GM12878 (cell line): ENCODE measurements at regions of chr6 and their contacts with region 1.

Region 1: GRCh38 chr6:27188885-27189418 is 58.5 kb upstream of the PRSS16 start:
- DNase-seq: peak; percentile 50
- ATAC-seq: peak; percentile 91
- H3K4me3 ChIP-seq: peak overlapping the region; percentile 75
- H3K27ac ChIP-seq: peak overlapping the region; percentile 78
- H3K4me1 ChIP-seq: no peaks in the 10 kb centered on the region
- H3K27me3 ChIP-seq: no peaks in the 10 kb centered on the region
- CTCF ChIP-seq: peak; percentile 49 to 71 (median 59); a peak in 5 of 6 replicates
- EP300 ChIP-seq: no peak
- POLR2A ChIP-seq: no peak
- RAD21 ChIP-seq: peak; percentile 90

Region 2: DNA sequence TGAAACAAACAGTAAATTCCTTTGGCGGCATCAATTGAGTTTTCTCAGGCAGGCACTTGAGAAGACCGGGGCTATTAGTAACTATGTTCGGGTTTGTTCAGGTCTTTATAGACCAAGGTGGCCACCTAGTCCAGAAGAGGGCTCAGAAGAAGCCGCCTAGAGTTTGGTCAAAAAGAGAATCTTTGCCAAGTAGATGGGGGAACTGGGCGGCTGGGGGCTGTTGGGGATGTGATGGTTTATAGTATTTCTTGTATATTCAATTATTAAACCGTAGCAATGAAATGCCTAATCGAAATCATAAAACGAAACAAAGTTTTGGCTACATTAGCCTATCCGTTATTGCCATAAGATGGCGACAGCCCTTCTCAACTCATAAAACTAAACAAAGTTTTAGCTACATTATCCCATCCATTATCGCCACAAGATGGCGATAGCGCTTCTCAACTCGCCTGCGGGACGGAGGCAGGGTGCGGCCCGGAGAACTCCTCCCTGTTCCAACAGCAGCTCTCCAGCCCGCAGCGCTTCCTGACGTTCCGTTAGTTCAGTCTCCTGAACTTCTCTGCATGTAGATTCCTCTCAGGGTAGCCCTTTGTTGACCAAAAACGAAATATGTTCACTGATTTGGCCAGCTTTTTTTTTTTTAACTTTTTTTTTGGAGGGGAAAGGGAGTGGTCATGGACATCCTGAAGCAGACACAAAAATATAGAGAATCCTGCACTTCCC is 62.0 kb before region 1 on chr6:
- CTCF ChIA-PET with region 1: interaction called, 7 read pairs
- POLR2A ChIA-PET with region 1: no interaction called
- RAD21 ChIA-PET with region 1: interaction called, 5 read pairs
- SMC1A ChIA-PET with region 1: interaction called, 11 read pairs
- in situ Hi-C with region 1: no loop called
- intact Hi-C with region 1: no loop called
- DNase-seq: peak; percentile 85
- ATAC-seq: peak; percentile 72
- H3K4me3 ChIP-seq: peak overlapping the region; percentile 72
- H3K27ac ChIP-seq: peak overlapping the region; percentile 93
- H3K4me1 ChIP-seq: peaks cover 16% of the 10 kb centered on the region
- H3K27me3 ChIP-seq: no peaks in the 10 kb centered on the region
- CTCF ChIP-seq: peak; percentile 73 to 98 (median 83); a peak in 5 of 6 replicates
- EP300 ChIP-seq: no peak
- POLR2A ChIP-seq: peak; percentile 54
- RAD21 ChIP-seq: peak; percentile 86

Region 3: DNA sequence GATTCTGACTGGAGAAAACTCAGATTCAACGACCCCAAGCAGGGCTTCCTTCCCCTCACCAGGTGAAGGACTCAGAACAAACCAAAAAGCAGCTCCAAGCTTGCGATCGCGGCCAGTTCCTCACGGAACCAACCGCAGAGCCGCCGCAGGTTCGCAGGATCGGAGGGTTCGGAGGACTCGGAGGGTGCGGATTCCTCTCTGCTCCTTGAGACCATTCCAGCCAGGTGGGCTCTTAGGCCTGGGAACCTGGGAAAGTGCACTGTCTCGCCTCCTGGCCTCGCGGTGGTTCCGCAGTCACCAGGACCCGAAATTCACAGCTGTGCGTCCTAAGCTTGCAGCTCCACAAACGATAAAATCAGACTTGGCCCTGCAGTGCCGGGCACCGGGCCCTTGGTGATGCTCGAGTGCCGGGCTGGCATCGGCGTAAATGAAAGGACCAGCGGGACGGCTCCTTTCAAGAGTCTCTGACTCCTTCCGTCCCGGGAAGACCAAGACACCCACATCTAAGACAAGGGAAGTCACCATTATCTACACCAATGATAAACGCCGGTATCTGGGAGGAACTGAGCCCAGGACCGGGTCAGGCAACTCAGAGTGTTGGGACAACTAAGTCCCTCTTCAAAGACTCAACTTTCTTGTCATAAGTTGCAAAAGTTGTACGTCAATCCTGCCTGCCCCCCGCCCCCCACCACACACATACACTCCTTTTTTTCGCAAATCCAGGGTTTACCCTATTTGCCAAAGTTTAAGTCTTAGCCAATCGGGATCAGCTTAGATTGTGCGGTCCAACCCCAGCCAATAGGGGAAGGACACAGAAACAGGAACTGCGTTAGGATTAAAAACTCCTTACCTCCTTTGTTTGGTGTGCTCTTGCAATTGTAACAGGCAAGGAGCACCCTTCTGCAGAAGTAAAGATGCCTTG is 11.2 kb before region 1 on chr6:
- CTCF ChIA-PET with region 1: interaction called, 14 read pairs
- POLR2A ChIA-PET with region 1: interaction called, 3 read pairs
- RAD21 ChIA-PET with region 1: interaction called, 7 read pairs
- SMC1A ChIA-PET with region 1: interaction called, 10 read pairs
- in situ Hi-C with region 1: no loop called
- intact Hi-C with region 1: no loop called
- DNase-seq: peak; percentile 61
- ATAC-seq: peak; percentile 89
- H3K4me3 ChIP-seq: peak overlapping the region; percentile 89
- H3K27ac ChIP-seq: peak overlapping the region; percentile 93
- H3K4me1 ChIP-seq: no peaks in the 10 kb centered on the region
- H3K27me3 ChIP-seq: no peaks in the 10 kb centered on the region
- CTCF ChIP-seq: peak; percentile 65 to 72 (median 70)
- EP300 ChIP-seq: no peak
- POLR2A ChIP-seq: peak; percentile 56; the same call in 1 of the 2 replicates
- RAD21 ChIP-seq: peak; percentile 54

Region 4: GRCh38 chr6:27242589-27243265 is 53.8 kb after region 1 on chr6:
- CTCF ChIA-PET with region 1: no interaction called
- POLR2A ChIA-PET with region 1: no interaction called
- RAD21 ChIA-PET with region 1: no interaction called
- SMC1A ChIA-PET with region 1: no interaction called
- in situ Hi-C with region 1: no loop called
- intact Hi-C with region 1: no loop called
- DNase-seq: no peak
- ATAC-seq: no peak
- H3K4me3 ChIP-seq: no peak overlapping the region
- H3K27ac ChIP-seq: no peak overlapping the region
- H3K4me1 ChIP-seq: peaks cover 8% of the 10 kb centered on the region
- H3K27me3 ChIP-seq: no peaks in the 10 kb centered on the region; a peak in 1 of 4 replicates
- CTCF ChIP-seq: no peak
- EP300 ChIP-seq: no peak
- POLR2A ChIP-seq: no peak
- RAD21 ChIP-seq: no peak

Region 5: GRCh38 chr6:27312146-27312949 is 123.4 kb after region 1 on chr6 and contains the start of gene POM121L2:
- CTCF ChIA-PET with region 1: interaction called, 5 read pairs
- POLR2A ChIA-PET with region 1: no interaction called
- RAD21 ChIA-PET with region 1: no interaction called
- SMC1A ChIA-PET with region 1: no interaction called
- in situ Hi-C with region 1: no loop called
- intact Hi-C with region 1: loop called (anchors 1 kb)
- DNase-seq: no peak
- ATAC-seq: peak; percentile 89
- H3K4me3 ChIP-seq: peak within 1 kb of the TSS; percentile 82
- H3K27ac ChIP-seq: no peak within 1 kb of the TSS
- H3K4me1 ChIP-seq: 0 out of 2 replicates have a peak, but pooled peaks cover 5% of the 10 kb centered on the region
- H3K27me3 ChIP-seq: no peaks in the 10 kb centered on the region; a peak in 2 of 4 replicates
- CTCF ChIP-seq: peak; percentile 74 to 85 (median 77)
- EP300 ChIP-seq: no peak
- POLR2A ChIP-seq: peak; percentile 45
- RAD21 ChIP-seq: peak; percentile 81
- polyA plus RNA-seq, gene POM121L2: not detected

Region 6: DNA sequence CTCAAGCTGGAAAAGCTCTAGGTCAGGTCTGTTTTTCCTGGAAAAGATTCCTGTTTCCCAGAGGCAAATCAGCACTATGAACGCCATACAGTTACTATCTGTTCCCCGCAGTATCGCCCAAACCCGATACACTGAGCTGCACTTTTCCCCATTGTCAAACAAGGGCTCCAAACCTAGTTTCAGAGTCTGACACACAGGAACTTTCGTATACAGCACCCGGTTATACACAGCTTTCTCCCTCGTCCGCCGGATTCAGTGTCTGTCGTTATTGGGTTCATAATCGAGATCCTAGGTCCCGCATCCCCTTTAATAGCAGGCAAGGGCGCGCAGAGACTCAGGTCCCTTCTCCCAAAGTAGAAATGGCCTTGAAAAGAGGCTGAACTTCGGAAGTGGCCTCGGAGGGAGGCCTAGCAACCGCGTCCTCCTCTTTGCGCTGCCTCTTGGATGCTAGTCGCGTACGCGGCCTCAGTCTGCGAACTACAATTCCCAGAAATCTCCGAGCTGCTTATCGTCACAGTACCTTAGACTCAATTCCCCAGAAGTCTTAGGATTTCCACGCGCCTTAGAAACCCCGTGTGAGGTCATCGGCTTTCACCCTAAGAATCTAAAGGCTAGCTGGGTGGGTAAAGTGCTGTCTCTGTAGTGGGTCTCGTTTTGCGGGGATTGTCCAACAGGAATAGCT is 233.8 kb after region 1 on chr6:
- CTCF ChIA-PET with region 1: no interaction called
- POLR2A ChIA-PET with region 1: no interaction called
- RAD21 ChIA-PET with region 1: no interaction called
- SMC1A ChIA-PET with region 1: no interaction called
- in situ Hi-C with region 1: no loop called
- intact Hi-C with region 1: no loop called
- DNase-seq: no peak
- ATAC-seq: no peak
- H3K4me3 ChIP-seq: no peak overlapping the region
- H3K27ac ChIP-seq: no peak overlapping the region
- H3K4me1 ChIP-seq: no peaks in the 10 kb centered on the region
- H3K27me3 ChIP-seq: no peaks in the 10 kb centered on the region
- CTCF ChIP-seq: no peak
- EP300 ChIP-seq: no peak
- POLR2A ChIP-seq: no peak
- RAD21 ChIP-seq: no peak

Region 7: DNA sequence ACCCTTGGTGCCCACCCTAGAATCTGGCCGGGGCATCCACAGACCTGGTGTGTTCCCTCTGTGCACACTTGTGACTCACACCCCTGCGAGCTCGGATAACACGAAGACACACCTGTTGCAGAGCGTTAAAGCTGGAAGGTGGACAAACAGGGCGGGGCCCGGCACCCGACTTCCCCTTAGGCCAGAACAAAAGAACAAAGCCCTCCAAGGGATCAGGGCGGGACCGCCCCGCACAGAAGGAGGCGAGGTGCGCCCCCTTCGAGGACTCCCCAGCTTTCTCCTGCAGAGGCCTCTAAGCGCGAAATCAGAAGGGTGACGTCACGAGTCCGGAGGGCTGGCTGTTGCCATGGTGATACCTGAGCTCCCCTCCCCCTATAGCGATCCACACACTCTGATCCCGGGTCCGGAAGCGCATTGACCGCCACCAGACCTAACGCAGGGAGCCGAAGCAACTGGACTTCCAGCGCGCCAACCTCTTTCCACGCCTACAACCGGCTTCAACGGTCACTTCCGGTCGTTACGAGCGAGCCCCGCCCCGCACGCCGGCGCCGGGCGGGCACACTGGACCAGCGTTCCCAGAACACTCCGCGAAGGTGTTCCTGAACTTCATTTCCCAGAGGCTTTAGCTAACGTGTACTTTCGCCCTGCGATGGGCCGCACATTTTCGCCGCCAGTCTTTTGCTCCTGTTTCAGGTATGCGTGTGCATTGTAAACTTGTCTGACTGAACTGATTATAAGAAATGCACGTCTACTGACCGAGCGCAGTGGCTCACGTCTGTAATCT is 283.9 kb after region 1 on chr6 and contains the start of gene ZNF184:
- CTCF ChIA-PET with region 1: interaction called, 3 read pairs
- POLR2A ChIA-PET with region 1: no interaction called
- RAD21 ChIA-PET with region 1: no interaction called
- SMC1A ChIA-PET with region 1: no interaction called
- in situ Hi-C with region 1: no loop called
- intact Hi-C with region 1: loop called (anchors 2 kb)
- DNase-seq: peak; percentile 89
- ATAC-seq: peak; percentile 91
- H3K4me3 ChIP-seq: peak within 1 kb of the TSS; percentile 97
- H3K27ac ChIP-seq: peak within 1 kb of the TSS; percentile 85
- H3K4me1 ChIP-seq: 0 out of 2 replicates have a peak, but pooled peaks cover 3% of the 10 kb centered on the region
- H3K27me3 ChIP-seq: no peaks in the 10 kb centered on the region
- CTCF ChIP-seq: peak in 1 of 3 experiments; percentile 20; a peak in 1 of 6 replicates
- EP300 ChIP-seq: 0 out of 4 replicates have a peak, but pooled peaks of 1 of the 2 experiments have one; percentile 7
- POLR2A ChIP-seq: peak; percentile 79
- RAD21 ChIP-seq: no peak
- polyA plus RNA-seq, gene ZNF184: 4.5 to 5.4 TPM

Region 8: DNA sequence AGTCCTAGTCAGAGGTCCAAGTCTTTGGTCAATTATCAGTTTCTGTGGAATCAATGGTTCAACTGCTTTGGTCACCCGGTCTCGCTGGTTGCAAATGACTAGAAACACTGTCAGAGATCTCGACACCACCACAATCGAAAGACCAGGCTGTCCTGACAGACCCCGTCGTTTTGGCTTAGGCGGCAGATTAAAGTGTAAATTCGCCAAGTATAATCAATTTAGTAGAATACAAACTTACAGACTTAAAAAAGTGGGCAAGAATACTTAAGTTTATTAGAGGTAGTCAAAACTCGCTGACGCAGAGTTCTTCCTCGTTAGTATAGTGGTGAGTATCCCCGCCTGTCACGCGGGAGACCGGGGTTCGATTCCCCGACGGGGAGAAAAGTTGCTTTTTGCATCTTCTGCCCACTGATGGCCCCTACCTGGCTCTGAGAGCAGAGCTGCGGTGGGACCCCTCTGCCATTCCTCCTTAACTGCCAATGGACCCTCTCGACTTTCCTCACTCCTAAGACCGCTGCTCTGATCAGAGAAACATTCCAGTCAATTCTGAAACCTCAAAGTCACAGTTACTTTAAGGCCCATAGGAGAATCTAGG is 314.6 kb after region 1 on chr6:
- CTCF ChIA-PET with region 1: no interaction called
- POLR2A ChIA-PET with region 1: no interaction called
- RAD21 ChIA-PET with region 1: no interaction called
- SMC1A ChIA-PET with region 1: no interaction called
- in situ Hi-C with region 1: no loop called
- intact Hi-C with region 1: no loop called
- DNase-seq: peak; percentile 73
- ATAC-seq: peak; percentile 70
- H3K4me3 ChIP-seq: peak overlapping the region; percentile 78
- H3K27ac ChIP-seq: peak overlapping the region; percentile 58
- H3K4me1 ChIP-seq: no peaks in the 10 kb centered on the region
- H3K27me3 ChIP-seq: no peaks in the 10 kb centered on the region; a peak in 1 of 4 replicates
- CTCF ChIP-seq: no peak
- EP300 ChIP-seq: no peak
- POLR2A ChIP-seq: no peak
- RAD21 ChIP-seq: no peak

Region 9: DNA sequence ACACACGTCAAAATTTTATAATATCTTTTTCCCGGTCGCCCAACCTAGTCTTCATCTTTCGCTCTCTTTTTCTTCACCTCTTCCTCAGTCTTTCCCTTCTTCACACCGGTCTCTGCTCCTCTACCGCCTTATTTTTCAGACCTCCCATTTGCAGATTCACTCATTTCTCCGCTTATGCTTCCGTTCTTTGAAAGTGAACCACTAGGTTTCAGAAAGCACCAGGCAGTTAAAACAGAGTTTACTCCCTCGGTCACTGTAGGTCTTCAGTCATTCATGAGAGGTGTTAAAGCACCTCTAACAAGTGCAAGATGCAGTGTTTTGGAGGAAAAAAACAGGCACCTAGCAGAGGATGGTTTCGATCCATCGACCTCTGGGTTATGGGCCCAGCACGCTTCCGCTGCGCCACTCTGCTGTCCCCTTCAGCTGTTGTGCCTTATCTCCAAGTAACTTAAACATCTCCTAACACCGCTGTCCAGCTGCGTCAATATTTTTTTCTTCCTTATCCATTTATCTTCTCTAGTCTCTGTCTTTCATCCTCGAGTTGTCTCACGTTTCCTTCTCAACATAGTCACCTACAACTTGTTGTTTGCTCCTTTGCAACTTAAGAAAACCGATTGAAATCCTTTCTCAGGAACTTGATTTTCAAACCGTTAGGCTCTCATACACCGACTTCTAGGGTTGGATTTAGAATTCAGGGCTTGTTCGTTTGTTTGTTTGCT is 403.7 kb after region 1 on chr6:
- CTCF ChIA-PET with region 1: no interaction called
- POLR2A ChIA-PET with region 1: no interaction called
- RAD21 ChIA-PET with region 1: no interaction called
- SMC1A ChIA-PET with region 1: no interaction called
- in situ Hi-C with region 1: no loop called
- intact Hi-C with region 1: loop called (anchors 5 kb)
- DNase-seq: peak; percentile 89
- ATAC-seq: peak; percentile 94
- H3K4me3 ChIP-seq: peak overlapping the region; percentile 81
- H3K27ac ChIP-seq: peak overlapping the region; percentile 9; the same call in 1 of the 2 replicates
- H3K4me1 ChIP-seq: peaks cover 11% of the 10 kb centered on the region
- H3K27me3 ChIP-seq: no peaks in the 10 kb centered on the region
- CTCF ChIP-seq: no peak
- EP300 ChIP-seq: peak in 1 of 2 experiments; percentile 84; a peak in 1 of 4 replicates
- POLR2A ChIP-seq: no peak
- RAD21 ChIP-seq: no peak

Region 10: DNA sequence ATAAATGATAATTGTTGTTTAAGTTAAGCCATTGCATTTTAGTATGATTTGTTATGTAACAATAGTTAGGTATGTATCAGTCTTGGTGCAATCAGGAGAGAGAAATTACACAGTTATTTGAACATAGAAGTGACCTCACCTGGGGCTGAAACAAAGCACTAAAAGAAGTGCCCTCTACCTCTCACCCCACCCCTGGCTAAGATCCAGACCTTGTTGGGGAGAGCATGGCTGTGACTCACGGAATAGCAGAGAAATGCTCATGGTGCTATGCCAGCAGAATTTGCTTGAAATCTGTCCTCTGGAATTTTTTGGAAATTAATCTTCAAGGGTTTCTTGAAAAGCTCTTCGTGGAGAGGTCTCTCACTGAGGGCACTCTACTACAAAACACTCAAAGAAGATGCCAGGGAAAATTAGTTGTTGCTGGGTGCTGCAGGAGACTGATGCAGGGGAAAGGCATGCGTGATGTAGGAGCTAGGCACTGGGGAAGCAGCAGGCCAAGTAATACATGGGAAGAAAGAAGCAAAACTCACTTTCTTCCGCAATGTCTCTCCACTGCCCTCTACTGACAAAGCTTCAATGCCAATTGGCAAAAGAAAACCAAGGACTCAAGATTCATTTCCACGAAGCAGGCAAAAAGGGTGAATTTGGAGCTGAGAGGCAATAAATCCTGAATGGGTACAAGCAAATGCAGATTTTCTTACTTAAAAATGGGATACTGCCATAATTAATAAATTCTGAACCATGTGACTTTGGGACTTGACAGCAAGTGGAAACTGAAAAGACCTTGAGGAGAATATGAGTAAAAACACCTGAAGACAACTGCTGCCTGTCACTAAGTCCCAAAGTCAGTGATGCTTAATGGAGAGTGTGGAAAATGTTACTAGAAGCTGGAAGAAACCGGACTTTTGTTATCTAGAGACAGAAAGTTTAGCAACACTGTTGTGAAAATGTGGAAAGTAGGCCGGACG is 420.2 kb after region 1 on chr6:
- CTCF ChIA-PET with region 1: interaction called, 4 read pairs
- POLR2A ChIA-PET with region 1: no interaction called
- RAD21 ChIA-PET with region 1: no interaction called
- SMC1A ChIA-PET with region 1: interaction called, 3 read pairs
- in situ Hi-C with region 1: no loop called
- intact Hi-C with region 1: loop called (anchors 5 kb)
- DNase-seq: peak; percentile 56
- ATAC-seq: peak; percentile 65
- H3K4me3 ChIP-seq: no peak overlapping the region
- H3K27ac ChIP-seq: no peak overlapping the region
- H3K4me1 ChIP-seq: no peaks in the 10 kb centered on the region
- H3K27me3 ChIP-seq: no peaks in the 10 kb centered on the region
- CTCF ChIP-seq: peak; percentile 82 to 90 (median 90)
- EP300 ChIP-seq: no peak
- POLR2A ChIP-seq: no peak
- RAD21 ChIP-seq: peak; percentile 82